Aorta (tissue), 5 donors: ENCODE measurements at regions of chr10 and their contacts with region 1.

Region 1: GRCh38 chr10:43105102-43105785 is 28.4 kb downstream of the RET start:
- DNase-seq: peak; percentile 79 to 91
- ATAC-seq: peak; percentile 96
- H3K4me3 ChIP-seq: peak overlapping the region in 1 of 2 donors; percentile 23
- H3K27ac ChIP-seq: no peak overlapping the region
- H3K4me1 ChIP-seq: no peaks in the 10 kb centered on the region
- H3K27me3 ChIP-seq: no peaks in the 10 kb centered on the region

Region 2: GRCh38 chr10:42866115-42866995 is 238.9 kb before region 1 on chr10:
- intact Hi-C with region 1: loop called (anchors 1 to 2 kb)
- DNase-seq: peak; percentile 87 to 90
- ATAC-seq: peak; percentile 92
- H3K4me3 ChIP-seq: no peak overlapping the region
- H3K27ac ChIP-seq: no peak overlapping the region
- H3K4me1 ChIP-seq: no peaks in the 10 kb centered on the region
- H3K27me3 ChIP-seq: no peaks in the 10 kb centered on the region